Posterior vena cava (tissue), 2 donors: ENCODE measurements at regions of chr3 and their contacts with region 1.

Region 1: DNA sequence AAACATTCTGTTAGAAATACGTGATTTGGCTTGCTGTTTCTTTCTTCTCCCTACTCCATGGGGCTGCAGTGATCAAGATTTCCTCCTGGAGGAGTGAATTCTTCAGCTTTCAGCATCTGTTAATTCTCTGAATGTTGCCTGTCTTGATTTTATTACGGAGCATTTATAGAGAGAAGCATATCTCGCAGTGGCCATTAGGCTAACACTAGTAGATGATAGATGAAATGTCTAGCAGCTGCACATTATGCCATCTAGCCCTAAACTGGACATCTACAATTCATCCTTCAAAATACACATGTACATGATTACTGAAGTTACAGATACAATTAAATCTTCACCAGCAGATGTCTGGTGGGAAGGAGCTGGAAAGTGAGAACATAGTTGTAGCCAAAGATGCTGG is 769.8 kb upstream of the NECTIN3 start:
- DNase-seq: no peak

Region 2: DNA sequence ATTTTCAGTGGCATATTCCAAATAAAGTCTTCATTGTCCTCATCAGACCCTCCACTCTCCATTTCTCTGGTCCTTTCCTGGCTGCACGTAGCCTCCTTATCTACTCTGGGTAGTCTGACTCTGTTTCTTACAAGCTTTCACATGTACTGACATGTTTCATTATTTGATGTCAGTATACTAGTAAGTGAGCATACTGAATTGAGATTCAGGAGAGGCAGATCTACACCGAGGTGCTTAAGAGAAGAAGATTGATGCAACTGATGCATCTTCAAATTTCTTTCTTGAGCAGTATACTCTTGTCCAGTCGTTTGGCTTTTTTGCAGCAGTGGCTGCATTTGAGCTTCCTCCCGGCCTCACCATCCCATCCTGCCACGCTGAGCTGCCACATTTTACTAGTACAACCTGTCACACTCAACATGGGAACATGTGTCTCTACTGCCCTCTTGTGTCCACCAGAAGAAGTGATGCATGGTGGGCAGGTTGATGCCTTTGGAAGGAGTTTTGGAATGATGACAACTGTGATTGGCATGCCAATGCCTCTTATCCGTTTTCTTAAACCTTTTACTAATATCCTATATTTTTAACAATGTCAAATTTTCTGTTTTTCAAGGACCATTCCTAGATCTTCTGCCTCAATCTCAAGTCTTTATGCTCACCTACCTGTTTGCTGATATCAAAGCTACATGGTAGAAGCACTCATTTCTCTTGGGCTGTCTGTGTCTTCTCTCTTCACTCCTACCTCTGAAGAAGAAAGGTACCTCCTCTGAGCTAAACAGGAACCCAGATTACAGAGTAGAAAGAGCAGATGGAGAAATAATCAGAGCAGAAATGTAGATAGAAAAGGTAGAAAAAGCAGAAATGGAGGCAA is 1386.8 kb before region 1 on chr3:
- intact Hi-C with region 1: no loop called
- DNase-seq: no peak

Region 3: DNA sequence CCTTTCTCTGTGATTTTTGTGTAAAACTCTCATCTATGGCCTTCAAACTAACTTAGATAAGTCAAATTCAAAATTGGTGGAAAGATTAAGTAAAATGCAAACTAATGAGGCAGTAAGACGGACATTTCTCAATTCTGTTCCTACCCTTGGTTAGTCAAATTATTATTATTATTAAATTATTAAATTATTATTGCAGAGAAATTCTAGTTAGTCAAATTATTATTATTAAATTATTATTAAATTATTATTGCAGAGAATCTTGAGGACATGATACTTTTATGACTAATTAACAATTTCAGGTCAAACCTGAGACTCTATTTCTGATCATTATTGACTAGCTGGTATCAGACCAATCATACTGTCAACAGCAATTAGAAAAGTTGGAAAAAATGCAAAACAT is 75.1 kb before region 1 on chr3:
- intact Hi-C with region 1: no loop called
- DNase-seq: no peak

Region 4: DNA sequence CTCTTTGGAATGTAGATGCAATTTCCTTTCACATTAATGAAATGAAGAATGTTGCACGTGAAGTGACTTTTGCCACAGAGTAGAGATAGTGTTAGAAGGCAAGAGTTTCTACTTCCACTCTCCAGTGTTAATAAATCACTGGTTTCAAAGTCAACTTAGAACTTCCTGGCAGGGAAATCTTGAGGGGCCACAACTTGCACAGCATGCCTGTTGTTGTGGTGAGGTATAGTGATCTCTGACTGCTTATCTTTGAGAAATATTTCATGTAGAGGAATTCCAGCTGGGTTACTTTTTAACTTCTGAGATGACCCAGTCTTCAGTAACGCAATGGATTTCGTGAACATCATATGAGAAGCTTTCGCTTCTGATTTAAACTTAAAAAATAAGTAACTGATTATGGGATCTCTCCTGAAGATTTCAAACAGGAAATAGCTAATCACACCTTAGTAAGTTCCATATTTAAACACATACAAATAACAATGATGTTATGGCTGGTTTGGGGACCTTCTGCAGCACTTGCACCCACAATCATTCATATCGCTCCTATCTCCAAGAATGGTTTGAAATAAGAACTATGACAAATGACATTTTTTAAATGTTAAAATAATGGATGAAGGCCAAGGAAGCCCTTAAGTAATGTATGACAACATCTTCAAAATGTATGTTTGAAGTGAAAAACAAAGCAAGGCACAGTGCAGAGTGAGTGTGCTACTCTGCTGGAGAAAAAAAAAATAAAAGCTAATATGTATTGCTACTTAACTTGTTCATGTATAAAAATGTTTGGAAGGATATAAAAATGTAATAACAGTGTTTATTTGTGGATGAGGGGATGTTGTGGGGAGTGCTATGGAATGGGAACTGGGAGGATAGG is 43.4 kb after region 1 on chr3:
- intact Hi-C with region 1: loop called in 1 of 2 experiments (anchors 2 kb)
- DNase-seq: no peak

Region 5: GRCh38 chr3:111035893-111036292 is 734.1 kb after region 1 on chr3:
- intact Hi-C with region 1: no loop called
- DNase-seq: no peak